HEK293 (cell line): ENCODE measurements at regions of chr5 and their contacts with region 1.

Region 1: GRCh38 chr5:60687927-60688720 is 11.8 kb downstream of the DEPDC1B start:
- H3K4me3 ChIP-seq: no peak overlapping the region
- H3K27ac ChIP-seq: no peak overlapping the region
- H3K4me1 ChIP-seq: no peaks in the 10 kb centered on the region; the same call in 1 of the 2 replicates
- CTCF ChIP-seq: no peak

Region 2: GRCh38 chr5:60494635-60495034 is 193.5 kb before region 1 on chr5:
- CTCF ChIA-PET with region 1: no interaction called
- POLR2A ChIA-PET with region 1: no interaction called
- H3K4me3 ChIP-seq: no peak overlapping the region
- H3K27ac ChIP-seq: no peak overlapping the region
- H3K4me1 ChIP-seq: no peaks in the 10 kb centered on the region
- CTCF ChIP-seq: no peak

Region 3: GRCh38 chr5:60668686-60669304 is 19.3 kb before region 1 on chr5:
- CTCF ChIA-PET with region 1: interaction called, 12 read pairs
- POLR2A ChIA-PET with region 1: no interaction called
- H3K4me3 ChIP-seq: no peak overlapping the region
- H3K27ac ChIP-seq: no peak overlapping the region
- H3K4me1 ChIP-seq: no peaks in the 10 kb centered on the region
- CTCF ChIP-seq: no peak